ENCODE measurements at regions of chr12 and their contacts with region 1.

Region 1: GRCh38 chr12:94762259-94762942 is 112.0 kb upstream of the TMCC3 start:
- DNase-seq: peak; percentile 56
- ATAC-seq: peak; percentile 85
- H3K4me3 ChIP-seq: no peak overlapping the region
- H3K27ac ChIP-seq: peak overlapping the region; percentile 35
- H3K4me1 ChIP-seq: peaks cover 30% of the 10 kb centered on the region
- H3K27me3 ChIP-seq: no peaks in the 10 kb centered on the region
- CTCF ChIP-seq: no peak
- EP300 ChIP-seq: peak in 1 of 2 experiments; percentile 46; a peak in 1 of 4 replicates
- POLR2A ChIP-seq: no peak
- RAD21 ChIP-seq: no peak

Region 2: DNA sequence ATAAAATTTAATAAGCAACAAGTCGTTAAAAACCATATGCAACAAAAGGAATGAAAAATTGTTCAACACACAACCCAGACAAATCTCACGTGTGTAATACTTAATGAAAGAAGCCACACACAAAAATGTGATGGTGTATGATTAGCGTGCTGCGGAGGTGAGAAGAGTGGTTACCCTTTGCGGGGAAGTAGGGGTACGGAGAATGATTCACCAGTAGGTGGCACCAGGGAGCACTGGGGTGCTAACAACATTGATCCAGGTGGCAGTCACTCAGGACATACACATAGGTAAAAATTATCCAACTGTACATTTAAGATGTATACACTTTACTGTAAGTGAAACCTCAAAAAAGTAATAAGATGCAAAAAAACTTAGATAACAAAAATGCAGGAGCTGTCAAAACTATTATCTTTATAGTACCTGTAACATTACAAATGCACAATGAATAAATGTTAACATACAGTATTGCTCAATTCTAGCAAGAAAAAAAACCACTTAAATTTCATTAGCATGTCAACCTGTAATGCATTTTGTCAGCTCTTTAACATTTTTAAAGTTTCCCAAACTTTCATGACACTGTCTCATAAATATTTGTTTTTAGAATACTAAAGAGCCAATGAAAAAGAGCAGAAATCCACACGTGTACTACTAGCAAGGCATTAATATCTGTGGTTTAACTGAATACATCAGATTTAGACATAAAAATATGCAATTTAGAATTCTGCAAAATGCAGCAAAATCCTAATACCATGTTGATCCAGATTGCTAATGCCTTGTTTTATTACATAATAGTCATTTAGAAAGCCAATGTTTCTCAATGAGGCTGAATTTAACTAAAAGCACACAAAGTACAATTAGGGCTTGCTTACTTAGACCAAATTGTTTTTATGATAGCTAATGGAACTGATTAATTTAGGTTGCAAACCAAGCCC is 158.7 kb before region 1 on chr12:
- CTCF ChIA-PET with region 1: interaction called, 11 read pairs
- POLR2A ChIA-PET with region 1: no interaction called
- RAD21 ChIA-PET with region 1: interaction called, 7 read pairs
- SMC1A ChIA-PET with region 1: interaction called, 9 read pairs
- in situ Hi-C with region 1: no loop called
- intact Hi-C with region 1: loop called (anchors 5 kb)
- DNase-seq: no peak
- ATAC-seq: peak; percentile 94
- H3K4me3 ChIP-seq: no peak overlapping the region
- H3K27ac ChIP-seq: no peak overlapping the region
- H3K4me1 ChIP-seq: peaks cover 8% of the 10 kb centered on the region
- H3K27me3 ChIP-seq: no peaks in the 10 kb centered on the region
- CTCF ChIP-seq: peak; percentile 55 to 80 (median 73)
- EP300 ChIP-seq: no peak
- POLR2A ChIP-seq: no peak
- RAD21 ChIP-seq: peak; percentile 52

Region 3: DNA sequence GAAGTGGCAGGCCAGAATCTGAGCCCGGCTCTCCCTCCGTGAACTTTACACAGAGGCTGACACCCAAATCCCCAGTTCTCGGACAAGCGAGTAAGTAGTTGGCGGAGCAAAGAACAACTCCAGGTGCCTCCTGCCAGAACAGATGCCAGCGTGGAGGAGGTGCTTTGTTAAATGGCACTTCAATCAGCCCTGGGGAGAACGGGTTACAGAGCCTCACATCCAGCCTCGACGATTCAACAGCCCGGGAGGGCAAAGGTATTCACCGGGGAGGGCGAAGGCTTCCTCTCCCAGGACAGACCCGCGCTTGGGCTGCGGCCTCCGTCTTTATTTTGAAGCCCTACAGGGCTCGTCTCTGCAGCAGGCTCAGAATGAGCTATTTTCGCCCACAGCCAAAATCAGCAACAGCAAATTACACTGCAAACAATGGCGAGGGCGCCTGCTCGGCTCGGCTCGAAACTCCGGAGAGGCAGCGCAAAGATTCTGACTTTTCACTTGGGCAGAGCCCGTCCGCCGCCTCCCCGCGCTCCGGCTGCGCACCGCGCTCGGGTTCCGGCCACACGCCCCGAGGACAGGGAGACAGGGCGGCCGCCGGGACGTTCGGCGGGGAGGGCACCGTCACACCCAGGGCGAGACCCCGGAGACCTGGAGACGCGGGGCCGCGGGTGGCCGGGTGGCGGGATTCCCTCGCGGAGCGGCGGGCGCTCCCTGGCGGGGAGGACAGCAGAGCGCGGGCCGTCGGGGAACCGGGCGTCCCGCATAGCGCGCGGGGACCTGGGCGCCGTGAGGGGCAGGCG is 112.9 kb before region 1 on chr12:
- CTCF ChIA-PET with region 1: interaction called, 3 read pairs
- POLR2A ChIA-PET with region 1: interaction called, 3 read pairs
- RAD21 ChIA-PET with region 1: no interaction called
- SMC1A ChIA-PET with region 1: no interaction called
- in situ Hi-C with region 1: no loop called
- intact Hi-C with region 1: loop called (anchors 10 kb)
- DNase-seq: no peak
- ATAC-seq: peak; percentile 64
- H3K4me3 ChIP-seq: peak overlapping the region; percentile 68
- H3K27ac ChIP-seq: no peak overlapping the region
- H3K4me1 ChIP-seq: peaks cover 3% of the 10 kb centered on the region
- H3K27me3 ChIP-seq: no peaks in the 10 kb centered on the region
- CTCF ChIP-seq: peak; percentile 30 to 33 (median 32); a peak in 5 of 6 replicates
- EP300 ChIP-seq: no peak
- POLR2A ChIP-seq: no peak
- RAD21 ChIP-seq: peak; percentile 37; the same call in 1 of the 2 replicates

Region 4: DNA sequence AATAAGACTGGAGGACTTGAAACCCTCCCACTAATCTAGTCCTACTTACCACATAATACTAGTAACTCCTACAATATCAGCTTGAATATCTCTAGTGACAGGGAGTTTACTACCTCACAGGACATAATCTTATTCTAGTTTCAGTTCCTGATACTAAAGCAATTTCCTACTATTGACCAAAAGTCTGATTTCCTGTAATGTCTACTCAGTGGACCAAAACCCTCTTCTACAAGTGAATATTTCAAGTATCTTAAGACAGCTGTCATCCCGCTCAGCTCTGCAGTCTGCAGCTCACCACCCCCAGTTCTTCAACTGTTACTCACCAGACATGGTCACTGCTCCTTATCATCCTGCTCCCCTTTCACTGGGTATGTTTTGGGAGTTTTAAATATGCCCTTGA is 41.2 kb before region 1 on chr12:
- CTCF ChIA-PET with region 1: interaction called, 6 read pairs
- POLR2A ChIA-PET with region 1: interaction called, 4 read pairs
- RAD21 ChIA-PET with region 1: interaction called, 6 read pairs
- SMC1A ChIA-PET with region 1: interaction called, 20 read pairs
- in situ Hi-C with region 1: no loop called
- intact Hi-C with region 1: no loop called
- DNase-seq: peak; percentile 75
- ATAC-seq: peak; percentile 92
- H3K4me3 ChIP-seq: 0 out of 2 replicates have a peak overlapping the region, but pooled peaks have one; percentile 8
- H3K27ac ChIP-seq: peak overlapping the region; percentile 63
- H3K4me1 ChIP-seq: peaks cover 24% of the 10 kb centered on the region
- H3K27me3 ChIP-seq: no peaks in the 10 kb centered on the region
- CTCF ChIP-seq: no peak
- EP300 ChIP-seq: 0 out of 4 replicates have a peak, but pooled peaks of 1 of the 2 experiments have one; percentile 34
- POLR2A ChIP-seq: no peak
- RAD21 ChIP-seq: no peak